PC-3 (cell line): ENCODE measurements at regions of chr17 and their contacts with region 1.

Region 1: DNA sequence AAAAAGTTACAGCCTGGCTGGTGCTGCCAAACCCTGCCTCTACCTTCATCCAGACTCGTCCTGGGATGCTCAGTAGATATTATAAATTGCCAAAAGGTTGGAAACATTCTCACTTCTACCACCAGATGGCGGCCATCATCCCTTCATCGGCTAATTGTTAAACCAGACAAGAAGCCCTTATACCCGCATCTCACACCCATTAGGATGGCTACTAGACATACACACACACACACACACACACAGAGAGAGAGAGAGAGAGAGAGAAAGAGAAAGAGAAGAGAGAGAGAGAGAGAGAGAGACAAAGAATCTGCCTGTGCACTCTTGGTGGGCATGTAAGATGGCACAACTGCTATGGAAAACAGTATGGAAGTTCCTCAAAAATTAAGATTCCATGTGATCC is 15.0 kb upstream of the SCIMP start:
- DNase-seq: peak; percentile 77
- ATAC-seq: peak; percentile 67
- H3K4me3 ChIP-seq: no peak overlapping the region
- H3K27ac ChIP-seq: no peak overlapping the region
- H3K4me1 ChIP-seq: no peaks in the 10 kb centered on the region
- H3K27me3 ChIP-seq: no peaks in the 10 kb centered on the region
- CTCF ChIP-seq: peak; percentile 71

Region 2: DNA sequence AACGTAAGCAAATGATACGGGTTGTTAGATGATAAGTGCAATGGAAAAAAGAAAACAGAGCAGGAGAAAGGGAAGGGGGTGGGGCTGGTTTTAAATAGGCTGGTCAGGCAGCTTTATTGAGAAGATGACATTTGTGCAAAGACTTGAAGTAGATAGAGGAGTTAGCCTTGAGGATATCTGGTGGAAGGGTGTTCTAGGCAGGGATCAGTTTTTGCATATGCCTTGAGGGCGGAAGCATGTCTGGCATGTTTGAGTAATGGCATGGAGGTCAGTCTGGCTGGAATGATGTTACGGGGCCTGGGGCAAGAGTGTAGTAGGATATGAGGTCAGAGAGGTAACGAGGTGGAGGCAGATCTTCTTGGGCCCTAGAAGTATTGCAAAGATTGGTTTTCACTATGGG is 37.2 kb after region 1 on chr17:
- CTCF ChIA-PET with region 1: no interaction called
- POLR2A ChIA-PET with region 1: no interaction called
- intact Hi-C with region 1: no loop called
- DNase-seq: no peak
- ATAC-seq: no peak
- H3K4me3 ChIP-seq: no peak overlapping the region
- H3K27ac ChIP-seq: no peak overlapping the region
- H3K4me1 ChIP-seq: peaks cover 15% of the 10 kb centered on the region
- H3K27me3 ChIP-seq: no peaks in the 10 kb centered on the region
- CTCF ChIP-seq: no peak

Region 3: DNA sequence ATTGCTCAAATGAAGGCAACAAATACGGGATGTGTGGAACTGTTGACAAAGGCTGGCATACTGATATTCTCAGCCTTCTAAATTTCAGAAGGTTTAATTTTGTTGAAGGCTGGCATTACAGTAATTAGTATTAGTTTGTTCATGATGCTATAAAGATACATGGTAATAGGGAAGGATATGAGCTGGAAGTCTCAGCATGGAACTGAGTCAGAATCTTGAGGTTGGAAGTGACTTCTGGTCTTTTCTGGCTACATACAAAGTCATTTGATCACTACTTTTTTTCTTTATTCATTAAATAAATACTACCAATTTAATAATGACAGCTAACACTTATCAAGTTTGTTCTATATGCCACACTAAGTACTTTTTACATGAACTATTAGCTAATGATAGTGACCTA is 55.0 kb after region 1 on chr17:
- CTCF ChIA-PET with region 1: no interaction called
- POLR2A ChIA-PET with region 1: no interaction called
- intact Hi-C with region 1: loop called (anchors 1 kb)
- DNase-seq: no peak
- ATAC-seq: no peak
- H3K4me3 ChIP-seq: no peak overlapping the region
- H3K27ac ChIP-seq: no peak overlapping the region
- H3K4me1 ChIP-seq: peaks cover 8% of the 10 kb centered on the region
- H3K27me3 ChIP-seq: no peaks in the 10 kb centered on the region
- CTCF ChIP-seq: no peak